ENCODE measurements at regions of chr2 and their contacts with region 1.

Region 1: DNA sequence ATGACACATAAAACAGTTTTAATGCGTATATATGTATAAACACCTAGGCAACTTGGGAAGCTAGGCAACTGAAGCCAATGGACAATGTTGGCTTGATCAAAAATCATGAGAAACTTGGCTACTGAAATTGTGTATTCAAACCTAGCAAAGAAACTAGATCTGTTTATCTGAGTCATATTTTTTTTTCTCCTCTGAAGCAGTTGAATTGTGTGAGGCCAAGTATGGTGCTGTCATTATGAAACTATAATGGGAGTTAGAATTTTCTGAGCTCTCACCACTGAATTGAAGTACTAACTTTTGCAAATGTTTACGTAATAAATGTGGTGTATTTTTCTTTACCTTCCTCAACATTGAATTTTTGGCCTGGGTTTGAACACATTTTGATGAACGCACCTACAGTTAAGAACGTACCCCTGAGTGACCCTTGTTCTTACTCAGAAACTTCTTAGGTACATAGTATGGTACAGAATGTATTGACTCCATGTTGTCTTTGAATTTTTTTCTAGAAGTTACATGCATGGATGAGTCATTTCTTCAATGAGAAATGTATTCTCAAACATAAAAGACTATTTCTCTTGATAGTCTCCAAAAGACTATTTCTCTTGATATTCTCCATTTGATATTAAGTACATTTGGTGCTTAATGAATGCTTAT is 23.8 kb downstream of the CD28 start:
- DNase-seq: no peak
- ATAC-seq: peak; percentile 50
- H3K4me3 Mint-ChIP-seq: peak overlapping the region; percentile 46
- H3K27ac Mint-ChIP-seq: peak overlapping the region; percentile 99
- H3K4me1 Mint-ChIP-seq: peaks cover 93% of the 10 kb centered on the region
- H3K27me3 Mint-ChIP-seq: no peaks in the 10 kb centered on the region

Region 2: GRCh38 chr2:203431391-203432185 is 298.6 kb before region 1 on chr2:
- CTCF ChIA-PET with region 1: no interaction called
- POLR2A ChIA-PET with region 1: no interaction called
- intact Hi-C with region 1: no loop called
- DNase-seq: no peak
- ATAC-seq: no peak
- H3K4me3 Mint-ChIP-seq: no peak overlapping the region
- H3K27ac Mint-ChIP-seq: no peak overlapping the region
- H3K4me1 Mint-ChIP-seq: no peaks in the 10 kb centered on the region
- H3K27me3 Mint-ChIP-seq: no peaks in the 10 kb centered on the region

Region 3: GRCh38 chr2:203706403-203706802 is 23.8 kb before region 1 on chr2 and contains the start of gene CD28:
- CTCF ChIA-PET with region 1: interaction called, 14 read pairs
- POLR2A ChIA-PET with region 1: interaction called, 14 read pairs
- intact Hi-C with region 1: loop called (anchors 1 kb)
- DNase-seq: peak; percentile 95
- ATAC-seq: peak; percentile 75
- H3K4me3 Mint-ChIP-seq: peak within 1 kb of the TSS; percentile 84
- H3K27ac Mint-ChIP-seq: peak within 1 kb of the TSS; percentile 100
- H3K4me1 Mint-ChIP-seq: peaks cover 44% of the 10 kb centered on the region
- H3K27me3 Mint-ChIP-seq: no peaks in the 10 kb centered on the region
- total RNA-seq, gene CD28: 175 TPM

Region 4: GRCh38 chr2:203751685-203752271 is 21.6 kb after region 1 on chr2:
- CTCF ChIA-PET with region 1: interaction called, 10 read pairs
- POLR2A ChIA-PET with region 1: interaction called, 4 read pairs
- intact Hi-C with region 1: loop called in 1 of 2 experiments (anchors 2 kb)
- DNase-seq: no peak
- ATAC-seq: no peak
- H3K4me3 Mint-ChIP-seq: no peak overlapping the region
- H3K27ac Mint-ChIP-seq: peak overlapping the region; percentile 77
- H3K4me1 Mint-ChIP-seq: peaks cover 67% of the 10 kb centered on the region
- H3K27me3 Mint-ChIP-seq: no peaks in the 10 kb centered on the region

Region 5: DNA sequence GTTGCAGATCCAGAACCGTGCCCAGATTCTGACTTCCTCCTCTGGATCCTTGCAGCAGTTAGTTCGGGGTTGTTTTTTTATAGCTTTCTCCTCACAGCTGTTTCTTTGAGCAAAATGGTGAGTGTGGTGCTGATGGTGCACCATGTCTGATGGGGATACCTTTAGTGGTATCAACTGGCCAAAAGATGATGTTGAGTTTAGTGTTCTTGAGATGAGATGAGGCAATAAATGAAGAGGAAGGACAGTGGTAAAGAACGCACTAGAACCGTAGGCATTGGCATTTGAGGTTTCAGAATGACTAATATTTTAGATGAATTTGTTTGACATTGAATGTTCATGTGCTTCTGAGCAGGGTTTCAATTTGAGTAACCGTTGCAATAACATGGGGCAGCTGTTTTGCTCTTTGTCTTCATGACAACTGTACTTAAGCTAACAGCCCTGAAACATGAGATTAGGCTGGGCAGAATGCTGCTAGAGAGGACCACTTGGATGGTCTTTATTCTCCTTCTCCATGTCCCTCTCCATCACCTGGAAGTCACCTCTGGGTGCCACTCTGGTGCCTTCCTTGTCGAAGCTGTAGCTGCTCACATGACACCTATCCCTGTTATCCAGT is 141.3 kb after region 1 on chr2:
- CTCF ChIA-PET with region 1: interaction called, 4 read pairs
- POLR2A ChIA-PET with region 1: interaction called, 10 read pairs
- intact Hi-C with region 1: loop called (anchors 1 to 5 kb)
- DNase-seq: peak; percentile 60
- ATAC-seq: peak; percentile 47
- H3K4me3 Mint-ChIP-seq: peak overlapping the region; percentile 93
- H3K27ac Mint-ChIP-seq: peak overlapping the region; percentile 100
- H3K4me1 Mint-ChIP-seq: peaks cover 73% of the 10 kb centered on the region
- H3K27me3 Mint-ChIP-seq: no peaks in the 10 kb centered on the region

Region 6: GRCh38 chr2:203934041-203934492 is 203.9 kb after region 1 on chr2:
- CTCF ChIA-PET with region 1: no interaction called
- POLR2A ChIA-PET with region 1: interaction called, 4 read pairs
- intact Hi-C with region 1: loop called in 1 of 2 experiments (anchors 5 kb)
- DNase-seq: peak; percentile 78
- ATAC-seq: peak; percentile 47
- H3K4me3 Mint-ChIP-seq: peak overlapping the region; percentile 69
- H3K27ac Mint-ChIP-seq: peak overlapping the region; percentile 96
- H3K4me1 Mint-ChIP-seq: peaks cover 61% of the 10 kb centered on the region
- H3K27me3 Mint-ChIP-seq: no peaks in the 10 kb centered on the region

Region 7: GRCh38 chr2:204024503-204024902 is 294.3 kb after region 1 on chr2:
- CTCF ChIA-PET with region 1: interaction called, 3 read pairs
- POLR2A ChIA-PET with region 1: no interaction called
- intact Hi-C with region 1: loop called in 1 of 2 experiments (anchors 5 kb)
- DNase-seq: peak; percentile 50
- ATAC-seq: no peak
- H3K4me3 Mint-ChIP-seq: no peak overlapping the region
- H3K27ac Mint-ChIP-seq: no peak overlapping the region
- H3K4me1 Mint-ChIP-seq: peaks cover 52% of the 10 kb centered on the region
- H3K27me3 Mint-ChIP-seq: no peaks in the 10 kb centered on the region

Measured in activated CD4-positive, alpha-beta T cell treated with anti-CD3 and anti-CD28 coated beads for 36 hours (primary cell).